Cardiac septum (tissue), 1 donor: ENCODE measurements at regions of chr1 and their contacts with region 1.

Region 1: DNA sequence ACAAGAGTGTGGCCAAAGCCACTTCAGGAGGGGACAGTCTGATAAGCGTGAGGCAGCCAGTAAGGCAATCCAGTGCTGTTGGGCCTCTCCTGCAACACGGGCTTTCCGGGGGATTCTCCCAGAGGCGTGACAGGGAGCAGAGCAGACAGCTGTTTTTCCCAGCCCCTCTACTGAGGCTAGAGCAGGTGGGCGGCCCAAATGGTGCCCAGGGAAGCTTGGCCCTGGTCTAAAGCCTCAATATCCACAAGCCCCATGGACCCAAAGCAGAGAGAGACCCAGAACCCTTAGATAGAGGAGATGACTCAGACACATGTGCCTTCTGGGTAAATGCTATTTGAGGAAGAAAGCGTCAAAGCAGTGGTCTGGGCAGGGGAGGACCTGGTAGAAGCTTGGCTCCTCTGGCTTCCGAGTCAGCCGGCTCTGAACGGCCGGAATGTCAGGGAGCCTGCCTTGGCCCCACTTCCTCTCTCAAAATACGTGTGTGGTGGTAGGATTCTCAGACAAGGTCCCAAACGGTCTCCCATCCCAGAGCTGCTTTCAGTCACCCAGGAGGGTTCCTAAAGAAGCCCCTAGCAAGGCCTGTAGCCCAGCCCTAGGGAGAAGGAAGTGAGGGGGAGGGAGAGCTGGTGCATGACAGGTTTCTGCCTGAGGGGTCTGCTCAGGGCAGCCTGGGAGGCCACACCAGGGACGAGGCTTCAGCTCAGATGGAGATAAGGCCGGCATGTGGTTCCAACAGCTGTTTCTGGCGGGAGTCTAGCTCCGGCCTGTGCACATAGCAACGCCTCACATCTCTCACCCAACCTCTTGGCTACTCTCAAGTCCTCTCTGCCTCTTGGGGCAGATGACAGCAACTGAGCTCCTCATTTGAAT is 28.8 kb downstream of the PIK3C2B start:
- DNase-seq: no peak

Region 2: GRCh38 chr1:204446370-204447111 is 19.2 kb before region 1 on chr1:
- intact Hi-C with region 1: loop called (anchors 2 kb)
- DNase-seq: peak; percentile 85